ENCODE measurements at regions of chr6 and their contacts with region 1.

Region 1: DNA sequence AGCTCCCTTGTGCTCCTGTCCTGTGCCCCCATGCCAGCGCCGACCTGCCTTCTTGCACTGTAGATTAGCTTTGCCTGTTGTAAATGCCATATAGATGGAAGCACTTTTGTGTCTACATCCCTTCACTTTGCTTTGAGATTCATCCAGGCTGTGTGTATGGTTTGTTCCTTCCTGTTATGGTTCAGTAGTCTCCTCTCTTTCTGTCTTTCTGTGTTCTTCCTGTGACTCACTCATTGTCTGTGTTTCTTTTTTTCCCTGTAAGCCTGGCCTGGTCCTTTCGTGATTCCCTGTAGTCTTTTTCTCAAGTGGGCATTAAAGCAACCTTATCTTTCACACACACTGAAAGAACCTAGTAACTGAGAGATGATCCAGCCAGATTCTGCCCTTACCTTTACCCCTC is 66.6 kb downstream of the JARID2 start:
- DNase-seq: no peak

Region 2: DNA sequence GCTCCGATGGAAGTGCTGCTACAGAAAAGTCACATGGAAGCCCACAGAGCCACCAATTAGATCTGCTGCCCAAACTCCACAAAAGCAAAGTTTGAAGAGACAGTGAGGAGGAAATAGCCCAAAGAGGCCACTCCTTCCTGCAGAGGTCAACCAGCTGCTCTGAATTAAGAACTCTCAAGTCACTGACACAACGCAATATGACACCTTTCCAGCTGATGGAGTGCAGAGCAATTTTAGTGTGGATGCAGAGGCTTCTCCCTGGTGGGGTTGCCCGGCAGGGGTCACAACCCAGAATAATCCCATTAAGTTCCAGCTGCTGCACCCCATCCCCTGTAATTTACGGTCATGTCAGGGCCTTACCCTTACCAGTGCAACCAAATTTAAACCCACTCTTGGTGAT is 428.6 kb before region 1 on chr6:
- intact Hi-C with region 1: no loop called
- DNase-seq: no peak

Region 3: DNA sequence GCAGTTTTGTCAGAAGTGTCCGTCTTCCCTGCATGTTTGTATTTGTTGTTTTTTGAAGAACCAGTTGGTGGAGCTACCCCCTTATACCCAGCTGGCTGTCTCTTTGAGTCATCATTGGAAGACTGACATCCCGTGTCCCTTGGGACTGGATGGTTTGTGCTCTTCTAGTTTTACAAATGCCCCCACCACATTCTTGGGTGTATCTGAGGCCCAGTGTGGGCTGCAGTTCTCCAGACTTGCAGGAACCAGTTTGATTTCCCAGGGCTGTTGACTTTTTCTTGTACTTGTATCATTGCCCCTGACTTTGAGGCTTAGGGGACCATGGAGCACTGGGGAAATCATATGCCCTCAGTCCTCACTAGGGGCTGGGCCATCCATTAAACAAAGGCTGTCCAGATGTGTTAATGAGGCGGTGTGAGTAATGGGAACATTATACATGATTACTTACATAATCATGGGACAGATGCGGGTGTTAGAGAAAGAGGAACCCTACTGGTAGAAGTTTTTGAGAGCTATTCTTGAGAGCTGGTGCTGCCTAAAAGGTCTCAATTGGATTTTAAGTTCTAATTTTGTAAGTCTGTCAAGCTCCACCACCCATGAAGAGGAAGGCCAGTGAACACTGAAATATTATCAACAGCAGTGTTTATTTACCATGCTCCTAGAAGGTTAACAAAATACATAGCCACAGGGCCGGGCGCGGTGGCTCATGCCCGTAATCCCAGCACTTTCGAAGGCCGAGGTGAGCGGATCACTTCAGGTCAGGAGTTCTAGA is 58.2 kb before region 1 on chr6:
- intact Hi-C with region 1: loop called (anchors 10 kb)
- DNase-seq: peak in 13 of 42 donors; percentile 35 to 76 (median 55)